ENCODE measurements at regions of chr4 and their contacts with region 1.

Region 1: DNA sequence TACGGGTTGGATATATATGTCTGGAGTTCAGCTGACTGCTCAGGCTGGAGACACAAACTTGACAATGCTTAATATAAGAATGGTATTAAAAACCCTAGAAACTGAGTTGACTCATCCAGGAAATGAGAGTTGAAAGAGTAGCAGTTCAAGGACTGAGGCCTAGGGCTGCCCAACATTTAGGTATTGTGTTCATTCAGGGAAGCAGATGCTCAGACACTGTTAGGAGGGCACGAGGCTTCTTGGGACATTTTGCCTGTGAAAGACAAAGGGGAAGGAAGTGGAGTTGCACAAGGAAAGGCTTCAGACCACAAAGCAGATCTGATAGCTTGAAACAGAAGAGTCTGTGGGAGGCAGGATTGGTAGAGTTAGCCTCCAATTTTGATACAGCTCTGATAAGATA is 52.0 kb upstream of the HS3ST1 start:
- DNase-seq: peak in 2 of 9 experiments; percentile 18 to 44
- ATAC-seq: peak; percentile 73
- H3K4me3 ChIP-seq: no peak overlapping the region
- H3K4me3 Mint-ChIP-seq: no peak overlapping the region
- H3K27ac ChIP-seq: no peak overlapping the region
- H3K27ac Mint-ChIP-seq: no peak overlapping the region
- H3K4me1 ChIP-seq: peaks cover 8% of the 10 kb centered on the region
- H3K4me1 Mint-ChIP-seq: no peaks in the 10 kb centered on the region
- H3K27me3 ChIP-seq: no peaks in the 10 kb centered on the region
- H3K27me3 Mint-ChIP-seq: no peaks in the 10 kb centered on the region
- CTCF ChIP-seq: no peak

Region 2: DNA sequence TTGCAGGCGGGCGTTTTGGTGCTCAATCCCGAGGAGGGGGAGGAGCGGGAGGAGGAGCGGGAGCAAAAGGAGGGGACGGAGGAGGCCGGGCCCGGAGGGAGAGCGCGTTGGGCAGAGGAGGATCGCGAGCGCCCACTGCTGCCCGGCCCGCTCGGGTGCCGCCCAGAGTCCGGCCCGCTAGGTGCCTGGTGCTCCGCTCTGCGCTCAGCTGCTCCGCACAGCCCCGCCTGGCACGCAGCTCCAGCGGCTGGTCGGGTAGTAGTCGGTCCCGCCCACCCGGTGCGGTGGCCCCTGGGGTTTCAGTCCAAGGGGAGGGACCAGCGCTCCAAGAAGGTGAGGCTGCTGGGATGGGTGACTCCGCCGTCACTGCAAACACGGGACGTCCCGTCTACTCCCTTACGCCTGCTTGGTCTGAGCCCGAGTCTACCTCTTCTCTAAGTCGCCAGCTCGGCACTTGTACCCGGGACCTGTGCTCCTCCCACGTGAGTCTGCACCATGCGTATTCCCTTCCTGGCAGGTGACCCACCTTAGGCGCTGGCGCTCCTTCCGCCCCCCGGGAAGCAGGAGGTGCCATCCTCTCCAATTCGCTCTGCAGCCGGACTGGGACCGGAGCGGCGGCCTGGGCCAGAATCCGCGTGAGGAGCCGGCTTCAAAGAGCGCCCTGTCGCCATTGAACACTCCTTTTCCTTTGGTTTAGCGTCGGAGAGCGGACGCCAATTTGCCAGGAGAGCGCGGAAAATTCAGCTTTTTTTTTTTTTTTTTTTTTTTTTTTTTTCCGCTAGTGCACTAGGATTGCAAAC is 51.6 kb before region 1 on chr4:
- CTCF ChIA-PET with region 1: no interaction called
- POLR2A ChIA-PET with region 1: no interaction called
- intact Hi-C with region 1: loop called in 1 of 2 experiments (anchors 10 kb)
- DNase-seq: peak in 4 of 9 experiments; percentile 14 to 37 (median 31)
- ATAC-seq: peak; percentile 31
- H3K4me3 ChIP-seq: peak overlapping the region; percentile 29
- H3K4me3 Mint-ChIP-seq: peak overlapping the region; percentile 70
- H3K27ac ChIP-seq: no peak overlapping the region
- H3K27ac Mint-ChIP-seq: no peak overlapping the region
- H3K4me1 ChIP-seq: peaks cover 9% of the 10 kb centered on the region
- H3K4me1 Mint-ChIP-seq: peaks cover 17% of the 10 kb centered on the region
- H3K27me3 ChIP-seq: peaks cover 9 to 20% of the 10 kb centered on the region in 2 experiments
- H3K27me3 Mint-ChIP-seq: peaks cover 28% of the 10 kb centered on the region
- CTCF ChIP-seq: no peak

Region 3: GRCh38 chr4:12186526-12186925 is 705.8 kb after region 1 on chr4:
- CTCF ChIA-PET with region 1: no interaction called
- POLR2A ChIA-PET with region 1: no interaction called
- intact Hi-C with region 1: no loop called
- DNase-seq: no peak
- ATAC-seq: no peak
- H3K4me3 ChIP-seq: no peak overlapping the region
- H3K4me3 Mint-ChIP-seq: no peak overlapping the region
- H3K27ac ChIP-seq: no peak overlapping the region
- H3K27ac Mint-ChIP-seq: no peak overlapping the region
- H3K4me1 ChIP-seq: no peaks in the 10 kb centered on the region
- H3K4me1 Mint-ChIP-seq: no peaks in the 10 kb centered on the region
- H3K27me3 ChIP-seq: no peaks in the 10 kb centered on the region
- H3K27me3 Mint-ChIP-seq: no peaks in the 10 kb centered on the region
- CTCF ChIP-seq: no peak